GM13976 (cell line): ENCODE measurements at regions of chr11 and their contacts with region 1.

Region 1: DNA sequence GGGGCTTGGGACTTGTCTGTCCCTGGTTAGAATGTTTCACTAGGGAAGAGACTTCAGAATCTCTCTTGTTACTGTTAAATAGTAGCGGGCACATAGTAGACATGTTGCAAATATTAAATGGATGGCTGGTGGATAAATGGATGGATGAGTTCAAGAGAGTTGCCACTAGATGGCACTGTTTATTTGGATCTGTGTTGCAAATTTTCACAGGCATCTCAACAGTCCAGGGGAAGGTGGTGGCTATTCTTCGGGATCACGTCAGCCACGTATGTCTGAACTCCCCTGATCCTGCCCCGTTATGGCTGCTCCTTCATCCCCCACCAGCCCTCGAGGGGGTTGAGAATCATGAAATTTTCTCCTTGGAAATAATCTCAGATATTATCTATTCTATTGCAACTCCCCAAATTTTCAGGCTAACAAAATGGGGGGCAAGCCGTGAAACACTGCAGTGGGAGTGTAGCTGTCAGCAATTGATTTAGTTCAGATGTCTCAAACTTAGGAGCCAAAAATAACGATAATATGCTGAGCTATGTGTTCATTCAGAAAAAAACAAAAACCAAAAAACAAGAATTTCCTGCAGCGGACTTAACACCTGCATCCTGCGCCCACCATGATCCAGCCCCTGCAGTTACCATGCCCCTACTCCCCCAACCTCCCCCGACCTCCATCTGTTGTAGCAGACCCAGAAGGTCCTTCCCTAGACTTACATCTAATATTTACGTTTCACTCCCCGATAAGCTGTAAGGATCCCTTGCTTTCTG is 29.1 kb upstream of the BIRC3 start:
- DNase-seq: peak; percentile 83
- CTCF ChIP-seq: peak; percentile 62

Region 2: DNA sequence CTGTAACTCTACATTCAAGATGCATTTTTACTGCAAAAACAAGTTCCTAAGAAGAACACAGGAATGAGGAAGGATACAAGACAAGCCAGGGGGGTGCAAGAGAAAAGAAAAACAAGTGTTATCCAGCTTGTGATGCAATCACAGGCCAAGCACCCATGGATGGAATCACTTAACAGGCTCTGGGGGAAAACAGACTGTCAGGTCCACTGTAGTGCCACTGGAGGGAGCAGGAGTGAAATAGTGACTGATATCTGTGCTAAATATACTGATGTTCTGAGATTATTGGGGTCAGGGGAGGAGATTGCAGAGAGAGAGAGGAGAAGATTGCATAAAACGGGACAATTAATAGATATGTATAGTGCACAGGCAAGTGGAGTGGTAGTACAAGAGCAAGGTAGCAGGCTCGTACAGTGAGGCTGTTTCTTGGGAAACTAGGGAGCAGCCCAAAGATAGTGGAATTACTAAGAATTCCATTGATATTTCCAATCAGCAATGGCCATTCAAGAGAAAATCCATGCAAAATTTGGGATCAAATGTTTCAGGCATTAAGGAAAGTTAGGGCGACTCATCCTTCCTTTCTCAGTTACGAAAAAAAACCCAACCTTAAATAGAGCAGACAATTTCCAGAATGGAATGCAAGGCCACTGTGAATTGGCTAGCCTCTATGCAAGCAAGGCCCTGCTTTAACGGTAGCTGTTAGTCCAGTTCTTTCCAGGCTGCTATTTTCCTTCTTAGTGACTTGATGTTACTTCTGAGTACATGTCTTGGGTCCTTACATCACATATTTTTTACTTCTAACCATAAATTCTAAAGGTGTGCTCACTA is 425.5 kb before region 1 on chr11:
- in situ Hi-C with region 1: no loop called
- DNase-seq: no peak
- CTCF ChIP-seq: no peak

Region 3: DNA sequence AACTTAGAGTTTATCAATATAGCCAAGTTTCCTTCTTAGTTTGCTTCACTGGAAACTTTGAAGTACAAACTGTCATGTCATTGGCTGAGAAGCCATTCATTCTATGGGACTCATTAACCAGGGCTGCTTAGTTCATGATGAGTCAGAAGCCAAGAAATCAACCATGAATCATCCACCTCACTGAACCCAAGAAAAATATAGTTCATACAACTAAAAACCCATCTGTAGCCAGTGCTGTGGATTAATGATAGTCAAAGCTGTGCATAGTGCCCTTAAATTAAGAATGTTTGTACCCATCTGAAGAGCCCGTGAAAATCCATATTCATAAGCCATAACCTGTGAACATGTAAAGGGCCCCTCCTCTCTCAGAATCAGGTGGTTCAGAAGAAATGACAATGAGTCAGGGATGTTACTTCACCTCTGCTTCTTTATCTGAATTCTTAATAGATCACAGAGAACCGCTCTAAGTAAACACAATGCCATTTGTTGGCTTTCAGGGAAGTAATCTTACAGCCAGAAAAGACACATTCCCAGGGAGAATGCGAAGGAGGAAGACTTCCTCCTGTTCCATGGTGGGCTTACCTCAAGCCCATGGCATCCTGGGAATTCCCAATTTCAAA is 311.6 kb after region 1 on chr11:
- in situ Hi-C with region 1: loop called (anchors 10 kb)
- DNase-seq: peak; percentile 57
- CTCF ChIP-seq: no peak